ENCODE measurements at regions of chr3 and their contacts with region 1.

Region 1: DNA sequence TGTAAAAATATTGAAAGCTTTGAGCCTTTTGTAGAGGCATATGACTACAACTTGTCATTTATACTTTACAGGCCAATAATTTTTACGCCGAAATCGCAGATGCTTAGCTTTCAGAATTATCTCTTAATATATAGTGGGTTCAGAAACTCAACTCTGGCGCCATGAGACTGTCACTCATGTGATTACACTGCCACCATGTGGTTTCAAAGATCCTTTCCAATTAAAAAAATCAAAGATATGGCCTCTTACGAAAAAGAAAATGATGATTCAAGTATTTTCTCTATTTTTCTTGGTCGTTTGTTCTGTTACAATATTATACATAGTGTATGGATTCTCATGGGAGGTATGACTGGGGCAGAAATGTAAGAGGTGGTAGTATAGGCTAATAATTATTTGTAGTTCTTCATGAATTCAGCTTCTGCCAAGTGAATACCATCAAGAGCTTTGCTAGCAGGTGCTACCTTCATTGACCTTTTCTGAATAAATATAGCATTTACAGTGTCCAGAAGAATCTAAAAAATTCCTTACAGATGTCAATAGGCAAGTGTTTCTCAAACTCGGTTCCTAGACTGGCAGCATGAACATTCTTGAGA is 751.7 kb upstream of the GOLIM4 start:
- DNase-seq: peak; percentile 25
- H3K4me3 ChIP-seq: no peak overlapping the region
- H3K27ac ChIP-seq: no peak overlapping the region
- H3K4me1 ChIP-seq: no peaks in the 10 kb centered on the region
- H3K27me3 ChIP-seq: peaks cover 11% of the 10 kb centered on the region; the same call in 1 of the 2 replicates
- CTCF ChIP-seq: peak; percentile 74
- EP300 ChIP-seq: no peak
- RAD21 ChIP-seq: peak; percentile 91

Region 2: DNA sequence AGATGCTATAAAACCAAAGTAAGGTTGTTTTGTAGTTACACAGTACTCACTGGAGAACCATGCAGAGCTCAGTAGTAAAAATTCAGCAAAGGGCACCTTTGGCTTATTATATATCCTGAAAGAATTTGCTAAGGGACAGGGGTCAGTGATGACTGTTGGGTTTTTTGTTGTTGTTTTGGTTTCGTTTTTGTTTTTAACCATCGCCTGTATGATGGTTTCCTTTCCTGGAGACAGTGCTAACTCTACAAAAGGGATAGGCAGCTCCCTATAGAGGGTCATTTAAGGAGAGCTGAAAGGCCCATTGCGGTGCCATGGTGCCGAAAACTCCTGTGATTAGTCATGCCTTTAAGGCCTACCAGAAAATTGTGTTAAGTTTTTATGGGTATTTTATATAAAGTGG is 633.5 kb before region 1 on chr3:
- CTCF ChIA-PET with region 1: interaction called, 97 read pairs
- POLR2A ChIA-PET with region 1: no interaction called
- DNase-seq: no peak
- H3K4me3 ChIP-seq: no peak overlapping the region; a peak in 1 of 4 replicates
- H3K27ac ChIP-seq: no peak overlapping the region
- H3K4me1 ChIP-seq: peaks cover 0 to 2% of the 10 kb centered on the region in 2 experiments; a peak in 1 of 4 replicates
- H3K27me3 ChIP-seq: no peaks in the 10 kb centered on the region
- CTCF ChIP-seq: no peak
- EP300 ChIP-seq: no peak
- RAD21 ChIP-seq: no peak

Region 3: GRCh38 chr3:168511428-168512014 is 335.9 kb before region 1 on chr3:
- CTCF ChIA-PET with region 1: interaction called, 35 read pairs
- POLR2A ChIA-PET with region 1: no interaction called
- DNase-seq: peak; percentile 12
- H3K4me3 ChIP-seq: no peak overlapping the region
- H3K27ac ChIP-seq: no peak overlapping the region
- H3K4me1 ChIP-seq: no peaks in the 10 kb centered on the region
- H3K27me3 ChIP-seq: no peaks in the 10 kb centered on the region
- CTCF ChIP-seq: peak; percentile 62
- EP300 ChIP-seq: no peak
- RAD21 ChIP-seq: peak; percentile 76

Region 4: DNA sequence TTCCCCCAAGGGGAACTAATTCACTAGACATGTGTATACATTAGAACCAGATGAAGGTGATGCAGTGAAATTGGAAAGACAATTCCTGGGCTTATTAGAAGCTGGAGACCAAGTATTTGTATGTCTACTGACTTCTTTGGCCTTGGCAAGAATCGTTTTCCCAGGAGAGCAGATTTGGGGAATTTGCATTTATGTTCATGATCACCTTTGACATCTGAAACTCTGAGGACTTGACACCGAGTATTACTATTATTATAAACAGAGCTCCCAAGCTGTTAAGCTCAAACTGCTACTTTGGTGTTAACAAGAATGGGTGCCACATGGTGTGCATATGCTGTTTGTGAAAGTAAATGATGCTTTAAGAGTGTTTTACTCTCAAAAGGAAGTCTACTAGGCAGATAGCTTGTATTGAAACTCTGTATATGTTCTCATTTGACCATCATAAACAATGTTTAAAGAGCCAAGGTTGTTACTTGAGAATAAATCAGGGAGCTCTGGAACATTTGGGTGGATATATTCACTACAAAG is 231.8 kb before region 1 on chr3:
- CTCF ChIA-PET with region 1: interaction called, 47 read pairs
- POLR2A ChIA-PET with region 1: no interaction called
- DNase-seq: no peak
- H3K4me3 ChIP-seq: no peak overlapping the region
- H3K27ac ChIP-seq: no peak overlapping the region
- H3K4me1 ChIP-seq: no peaks in the 10 kb centered on the region
- H3K27me3 ChIP-seq: no peaks in the 10 kb centered on the region
- CTCF ChIP-seq: no peak
- EP300 ChIP-seq: no peak
- RAD21 ChIP-seq: no peak

Region 5: GRCh38 chr3:168815946-168816345 is 31.4 kb before region 1 on chr3:
- CTCF ChIA-PET with region 1: interaction called, 10 read pairs
- POLR2A ChIA-PET with region 1: no interaction called
- DNase-seq: no peak
- H3K4me3 ChIP-seq: no peak overlapping the region
- H3K27ac ChIP-seq: no peak overlapping the region
- H3K4me1 ChIP-seq: no peaks in the 10 kb centered on the region
- H3K27me3 ChIP-seq: no peaks in the 10 kb centered on the region; the same call in 1 of the 2 replicates
- CTCF ChIP-seq: no peak
- EP300 ChIP-seq: no peak
- RAD21 ChIP-seq: no peak

Region 6: GRCh38 chr3:168834558-168834957 is 12.8 kb before region 1 on chr3:
- CTCF ChIA-PET with region 1: interaction called, 25 read pairs
- POLR2A ChIA-PET with region 1: no interaction called
- DNase-seq: no peak
- H3K4me3 ChIP-seq: no peak overlapping the region
- H3K27ac ChIP-seq: no peak overlapping the region
- H3K4me1 ChIP-seq: no peaks in the 10 kb centered on the region
- H3K27me3 ChIP-seq: no peaks in the 10 kb centered on the region
- CTCF ChIP-seq: no peak
- EP300 ChIP-seq: no peak
- RAD21 ChIP-seq: no peak

Region 7: GRCh38 chr3:168865022-168865551 is 17.7 kb after region 1 on chr3:
- CTCF ChIA-PET with region 1: interaction called, 34 read pairs
- POLR2A ChIA-PET with region 1: no interaction called
- DNase-seq: peak; percentile 3
- H3K4me3 ChIP-seq: no peak overlapping the region
- H3K27ac ChIP-seq: no peak overlapping the region
- H3K4me1 ChIP-seq: no peaks in the 10 kb centered on the region; a peak in 1 of 4 replicates
- H3K27me3 ChIP-seq: no peaks in the 10 kb centered on the region; the same call in 1 of the 2 replicates
- CTCF ChIP-seq: peak; percentile 84
- EP300 ChIP-seq: no peak
- RAD21 ChIP-seq: peak; percentile 64

Measured in SK-N-SH (cell line).